ENCODE measurements at regions of chr13 and their contacts with region 1.

Region 1: GRCh38 chr13:29799051-29799450 is 51.4 kb downstream of the UBL3 start:
- DNase-seq: no peak
- ATAC-seq: no peak
- H3K4me3 ChIP-seq: no peak overlapping the region
- H3K27ac ChIP-seq: no peak overlapping the region
- H3K4me1 ChIP-seq: peaks cover 7% of the 10 kb centered on the region; the same call in 1 of the 2 replicates
- H3K27me3 ChIP-seq: no peaks in the 10 kb centered on the region
- CTCF ChIP-seq: no peak
- POLR2A ChIP-seq: no peak
- RAD21 ChIP-seq: no peak

Region 2: GRCh38 chr13:29782798-29783197 is 16.3 kb before region 1 on chr13:
- CTCF ChIA-PET with region 1: no interaction called
- POLR2A ChIA-PET with region 1: interaction called, 19 read pairs
- dilution Hi-C with region 1: no loop called
- in situ Hi-C with region 1: no loop called
- intact Hi-C with region 1: no loop called
- DNase-seq: no peak
- ATAC-seq: no peak
- H3K4me3 ChIP-seq: no peak overlapping the region
- H3K27ac ChIP-seq: no peak overlapping the region
- H3K4me1 ChIP-seq: peaks cover 2% of the 10 kb centered on the region; the same call in 1 of the 2 replicates
- H3K27me3 ChIP-seq: no peaks in the 10 kb centered on the region
- CTCF ChIP-seq: no peak
- POLR2A ChIP-seq: no peak
- RAD21 ChIP-seq: no peak

Measured in IMR-90 (cell line).